ENCODE measurements at regions of chr1 and their contacts with region 1.

Region 1: DNA sequence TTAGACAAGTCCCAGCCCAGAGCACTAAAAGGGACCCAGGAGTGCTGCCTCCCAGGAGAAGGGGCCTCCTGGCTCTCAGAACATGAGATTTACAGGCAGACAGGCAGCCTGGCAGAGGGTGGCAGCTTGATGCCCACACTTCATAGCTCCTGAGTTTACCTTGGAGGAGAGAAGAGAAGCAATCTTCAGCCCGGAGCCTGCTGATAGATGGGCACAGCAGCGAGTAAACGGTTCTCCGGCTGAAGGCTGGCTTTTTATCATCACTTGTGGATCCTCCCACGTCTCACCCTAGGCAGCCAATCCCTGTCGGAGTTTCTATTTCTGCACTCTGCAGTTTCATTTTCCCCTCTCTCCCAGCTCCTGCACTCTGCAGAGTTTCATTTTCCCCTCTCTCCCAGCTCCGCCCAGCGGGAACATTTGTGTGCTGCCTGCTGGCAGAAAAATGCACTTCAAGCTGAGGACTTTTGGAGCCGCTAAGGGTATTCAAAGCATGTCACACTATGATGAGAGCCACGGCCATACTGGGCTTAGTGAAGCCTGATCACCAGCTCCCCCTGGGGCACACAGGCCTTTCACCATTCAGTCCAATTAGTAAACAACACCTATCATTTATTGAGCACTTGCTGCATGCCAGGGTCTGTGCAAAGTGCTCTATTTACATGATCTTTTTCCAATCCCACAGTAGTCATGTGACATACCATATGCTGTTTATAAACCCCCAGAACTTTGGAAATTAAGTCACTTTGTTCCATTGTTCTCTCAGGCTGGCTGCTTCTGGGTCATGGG is at the start of gene IFI6:
- DNase-seq: peak; percentile 84
- H3K4me3 Mint-ChIP-seq: peak within 1 kb of the TSS; percentile 94
- H3K27ac Mint-ChIP-seq: peak within 1 kb of the TSS; percentile 90
- H3K4me1 Mint-ChIP-seq: peaks cover 40% of the 10 kb centered on the region
- H3K27me3 Mint-ChIP-seq: no peaks in the 10 kb centered on the region
- total RNA-seq, gene IFI6: 71.7 and 85.6 TPM in 2 replicates

Region 2: DNA sequence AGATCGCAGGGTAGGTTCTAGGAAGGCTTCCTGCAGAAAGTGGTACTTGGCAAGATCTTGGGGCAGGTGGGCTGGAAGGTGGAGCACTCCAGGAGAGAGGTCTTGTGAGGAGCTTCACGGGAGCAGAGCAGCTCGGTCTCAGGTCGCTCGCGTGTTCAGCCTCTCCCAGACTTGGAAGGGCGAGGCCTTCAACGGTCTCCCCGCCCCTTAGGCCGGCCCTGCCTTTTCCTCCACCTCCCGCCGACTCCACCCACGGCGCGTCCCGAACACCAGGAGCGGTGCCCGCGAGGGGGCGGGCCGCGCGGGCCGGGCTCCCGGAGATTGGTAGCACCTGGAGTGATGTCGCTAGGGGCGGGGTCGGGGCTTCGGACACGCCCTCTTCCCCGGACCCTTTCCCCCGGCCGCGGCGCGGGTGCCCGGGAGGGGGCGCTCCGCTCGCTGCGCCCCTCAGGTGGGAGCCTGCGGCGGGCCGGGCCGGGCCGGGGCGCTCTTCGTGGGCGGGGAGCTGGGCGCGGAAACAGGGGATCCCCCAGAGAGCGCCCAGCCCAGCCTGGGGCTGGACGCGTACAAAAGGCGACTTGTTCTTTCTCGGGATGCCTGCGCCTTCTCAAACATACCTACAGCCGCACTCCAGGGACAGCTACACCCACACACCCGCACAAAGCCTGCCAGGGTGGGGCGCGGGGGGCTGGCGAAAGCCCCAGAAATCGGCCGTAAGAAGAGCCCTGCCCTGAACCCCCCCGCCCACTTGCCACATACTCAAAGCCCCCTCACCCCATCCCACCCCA is 103.7 kb before region 1 on chr1:
- intact Hi-C with region 1: no loop called
- DNase-seq: peak; percentile 94
- H3K4me3 Mint-ChIP-seq: peak overlapping the region; percentile 67
- H3K27ac Mint-ChIP-seq: no peak overlapping the region
- H3K4me1 Mint-ChIP-seq: peaks cover 18% of the 10 kb centered on the region
- H3K27me3 Mint-ChIP-seq: no peaks in the 10 kb centered on the region

Region 3: DNA sequence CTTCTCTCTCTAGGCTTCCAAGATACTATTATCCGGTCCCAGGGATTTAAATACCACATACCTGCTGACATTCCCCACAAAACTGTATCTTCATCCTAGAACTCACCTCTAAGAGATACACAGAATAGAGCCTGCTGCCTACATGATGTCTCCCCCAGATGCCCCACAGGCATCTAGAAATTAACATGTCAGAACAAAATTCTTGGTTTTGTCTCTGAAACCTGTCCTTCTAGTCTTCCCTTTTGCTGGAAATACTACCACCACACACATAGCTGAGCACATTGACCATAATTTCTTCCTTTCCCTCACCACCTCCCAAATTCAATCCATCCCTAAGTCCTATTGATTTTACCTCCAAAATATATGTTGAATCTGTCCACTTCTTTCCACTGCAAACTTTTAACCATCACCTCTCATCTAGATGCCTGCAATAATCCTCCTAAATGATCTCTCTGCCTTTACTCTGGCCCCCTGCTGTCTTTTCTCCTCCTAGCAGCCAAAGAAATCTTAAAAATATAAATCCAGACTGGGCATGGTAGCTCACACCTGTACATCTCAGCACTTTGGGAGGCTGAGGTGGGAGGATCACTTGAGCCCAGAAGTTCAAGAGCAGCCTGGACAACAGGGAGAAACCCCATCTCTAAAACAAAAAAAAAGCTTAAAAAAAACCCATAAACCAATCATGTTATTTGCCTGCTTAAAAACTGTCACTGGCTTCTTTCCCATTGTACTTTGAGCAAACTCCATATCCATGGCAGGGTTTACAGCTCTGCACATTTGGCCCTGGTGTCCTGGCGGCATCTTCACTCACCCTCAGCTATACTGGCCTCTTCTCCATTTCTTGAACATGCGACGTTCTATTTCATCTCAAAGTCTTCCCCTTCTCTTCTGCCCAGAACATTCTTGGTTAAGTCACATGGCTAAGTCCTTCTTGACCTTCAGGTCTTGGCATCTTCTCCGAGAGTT is 47.4 kb after region 1 on chr1:
- intact Hi-C with region 1: loop called (anchors 1 kb)
- DNase-seq: no peak
- H3K4me3 Mint-ChIP-seq: no peak overlapping the region
- H3K27ac Mint-ChIP-seq: no peak overlapping the region
- H3K4me1 Mint-ChIP-seq: peaks cover 1% of the 10 kb centered on the region
- H3K27me3 Mint-ChIP-seq: peaks cover 18% of the 10 kb centered on the region

Region 4: GRCh38 chr1:27744556-27744955 is 72.4 kb after region 1 on chr1:
- intact Hi-C with region 1: no loop called
- DNase-seq: no peak
- H3K4me3 Mint-ChIP-seq: no peak overlapping the region
- H3K27ac Mint-ChIP-seq: no peak overlapping the region
- H3K4me1 Mint-ChIP-seq: no peaks in the 10 kb centered on the region
- H3K27me3 Mint-ChIP-seq: no peaks in the 10 kb centered on the region

Region 5: GRCh38 chr1:27830621-27831424 is 158.7 kb after region 1 on chr1 and contains the start of gene PPP1R8:
- intact Hi-C with region 1: loop called (anchors 2 kb)
- DNase-seq: peak; percentile 86
- H3K4me3 Mint-ChIP-seq: peak within 1 kb of the TSS; percentile 93
- H3K27ac Mint-ChIP-seq: peak within 1 kb of the TSS; percentile 84
- H3K4me1 Mint-ChIP-seq: peaks cover 17% of the 10 kb centered on the region
- H3K27me3 Mint-ChIP-seq: no peaks in the 10 kb centered on the region
- total RNA-seq, gene PPP1R8: 84.1 and 88.1 TPM in 2 replicates

Measured in activated T-helper 1 cell treated with anti-CD3 and anti-CD28 coated beads, Interleukin-12 subunit alpha, Interleukin-12 subunit beta, Interleukin-2, Interleukin-4 antibody, amounts not matched to agents 30 ng/mL and 10 ng/mL and 1 ng/mL, durations not matched to agents 14 hours and 24 hours and 36 hours (primary cell).